Aorta (tissue), 5 donors: ENCODE measurements at regions of chr12 and their contacts with region 1.

Region 1: DNA sequence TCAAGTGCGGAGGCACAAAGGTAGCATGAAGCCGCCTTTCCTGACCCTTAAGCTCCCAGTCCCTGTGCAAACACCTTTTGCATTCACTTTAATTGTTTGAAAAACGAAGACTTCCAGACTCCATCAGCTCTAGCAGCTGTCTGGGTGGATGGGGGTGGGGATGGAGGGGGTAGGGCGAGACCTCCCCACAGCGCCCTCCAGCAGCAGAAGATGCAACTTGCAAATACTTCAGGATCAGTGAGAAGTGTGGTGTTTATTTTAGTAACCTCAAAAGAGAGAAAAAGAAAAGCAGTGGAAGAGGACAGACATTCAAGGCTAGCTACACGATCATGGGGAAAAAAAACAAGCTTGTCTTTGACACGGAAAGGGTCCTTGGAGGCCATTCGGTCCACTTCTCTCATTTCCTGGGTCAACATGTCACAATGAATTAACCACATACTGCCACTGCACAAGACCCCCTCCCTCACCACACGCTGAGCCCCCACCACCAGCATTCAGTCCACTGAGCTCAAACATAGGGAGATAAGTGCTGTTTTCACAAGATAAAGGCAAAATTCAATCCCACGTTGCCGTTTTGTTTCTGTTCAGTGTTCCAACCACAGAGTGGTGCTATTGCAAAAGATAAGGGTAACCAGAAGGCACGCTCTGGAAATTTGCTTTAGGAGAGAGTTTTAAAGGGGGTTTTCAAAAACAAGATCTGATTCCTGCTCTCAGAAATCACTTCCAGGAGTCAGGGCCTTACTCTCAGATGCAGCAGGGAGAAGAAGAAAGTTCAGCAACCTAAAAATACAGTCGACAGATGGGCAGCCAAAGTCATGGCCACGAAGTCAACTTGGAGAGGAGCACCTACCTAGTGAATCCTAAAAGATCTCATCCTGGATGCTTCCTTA is 3.3 kb upstream of the NTF3 start:
- DNase-seq: no peak
- ATAC-seq: no peak
- H3K4me3 ChIP-seq: no peak overlapping the region
- H3K27ac ChIP-seq: no peak overlapping the region
- H3K4me1 ChIP-seq: no peaks in the 10 kb centered on the region
- H3K27me3 ChIP-seq: no peaks in the 10 kb centered on the region

Region 2: GRCh38 chr12:5022465-5023061 is 406.0 kb before region 1 on chr12:
- intact Hi-C with region 1: loop called (anchors 5 to 10 kb)
- DNase-seq: peak in 1 of 2 donors; percentile 81
- ATAC-seq: peak; percentile 63
- H3K4me3 ChIP-seq: no peak overlapping the region
- H3K27ac ChIP-seq: no peak overlapping the region
- H3K4me1 ChIP-seq: peaks cover 0 to 2% of the 10 kb centered on the region in 2 donors
- H3K27me3 ChIP-seq: no peaks in the 10 kb centered on the region

Region 3: GRCh38 chr12:5488626-5488955 is 60.0 kb after region 1 on chr12:
- intact Hi-C with region 1: loop called in 1 of 2 experiments (anchors 5 kb)
- DNase-seq: no peak
- ATAC-seq: no peak
- H3K4me3 ChIP-seq: no peak overlapping the region
- H3K27ac ChIP-seq: peak overlapping the region; percentile 73 to 99
- H3K4me1 ChIP-seq: peaks cover 4 to 12% of the 10 kb centered on the region in 2 donors
- H3K27me3 ChIP-seq: no peaks in the 10 kb centered on the region

Region 4: DNA sequence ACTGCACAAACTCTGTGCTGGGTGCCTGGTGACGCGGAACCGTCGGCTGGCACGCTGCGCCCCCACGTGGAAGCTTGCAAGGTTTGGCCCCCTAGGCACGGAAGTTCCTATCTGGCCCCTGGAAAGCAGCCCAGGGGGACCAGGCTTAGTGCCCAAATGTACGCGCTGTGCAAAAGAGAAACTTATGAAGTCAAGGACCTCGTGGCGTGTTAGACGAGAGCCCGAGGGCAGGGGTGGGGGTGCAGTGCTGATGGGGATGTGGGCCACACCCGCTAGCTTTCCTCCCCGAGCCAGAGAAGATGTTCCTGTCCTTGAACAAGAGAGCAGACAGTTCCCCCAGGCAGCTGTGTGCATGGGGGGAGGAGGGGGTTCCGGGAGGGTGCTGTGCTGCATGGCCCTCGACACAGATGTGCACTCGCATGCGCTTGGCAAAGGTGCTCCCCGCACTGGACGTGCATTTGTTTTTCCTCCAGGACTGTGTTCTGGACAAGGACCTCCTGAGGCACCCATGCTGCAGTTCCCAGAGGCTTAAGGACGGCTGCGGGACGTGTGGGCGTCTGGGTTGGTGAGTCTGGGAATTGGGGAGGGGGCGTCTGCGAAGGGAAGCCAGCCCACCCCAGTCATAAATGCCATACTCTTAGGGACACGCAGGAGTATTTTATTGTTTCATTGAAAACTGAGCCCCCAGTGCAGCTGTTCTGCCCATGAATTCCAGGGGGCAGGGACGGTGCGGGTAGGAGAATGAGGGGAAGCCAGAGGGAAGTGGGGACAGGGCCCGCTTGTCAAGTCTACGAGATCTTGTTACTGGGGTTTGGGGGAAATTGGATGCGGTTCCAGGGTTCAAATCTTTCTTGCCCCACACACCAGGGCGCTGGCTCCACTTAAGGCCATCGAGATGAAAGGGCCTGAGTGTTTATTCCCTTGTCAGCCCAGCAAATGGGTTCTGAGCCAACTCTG is 83.3 kb after region 1 on chr12:
- intact Hi-C with region 1: loop called (anchors 1 kb)
- DNase-seq: peak; percentile 74 to 91
- ATAC-seq: peak; percentile 69
- H3K4me3 ChIP-seq: no peak overlapping the region
- H3K27ac ChIP-seq: no peak overlapping the region
- H3K4me1 ChIP-seq: no peaks in the 10 kb centered on the region
- H3K27me3 ChIP-seq: no peaks in the 10 kb centered on the region

Region 5: DNA sequence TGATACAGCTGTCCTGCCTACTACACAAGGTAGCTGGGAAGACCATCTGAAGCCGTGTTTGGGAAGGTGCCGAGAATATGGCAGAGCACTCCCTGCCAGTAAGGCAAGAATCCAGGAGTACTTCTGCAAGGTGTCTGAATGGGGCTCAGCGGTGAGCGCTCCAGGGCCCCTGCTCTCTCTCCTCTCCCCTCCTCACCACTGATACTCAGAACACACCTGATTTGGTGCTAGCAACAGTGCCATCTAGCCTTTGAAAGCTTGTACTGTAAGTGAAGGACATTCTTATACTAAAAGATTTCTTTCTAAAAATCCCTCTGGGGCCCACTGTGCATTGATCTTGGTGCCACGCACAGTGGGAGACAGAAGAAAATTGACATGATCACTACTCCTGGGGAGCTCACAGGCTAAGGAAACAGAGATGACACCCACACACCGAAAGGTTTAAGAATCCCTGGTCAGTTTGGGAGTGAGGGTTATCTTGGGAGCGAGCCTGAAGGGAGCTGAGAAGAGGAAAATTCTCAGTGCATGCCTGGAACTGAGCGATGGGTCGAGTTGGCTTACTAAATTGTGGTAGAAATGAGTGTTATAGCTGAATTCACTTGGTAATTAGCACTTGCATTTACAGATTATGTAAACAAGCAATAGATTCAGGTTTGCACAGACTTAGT is 220.2 kb after region 1 on chr12:
- intact Hi-C with region 1: loop called (anchors 5 kb)
- DNase-seq: no peak
- ATAC-seq: peak; percentile 60
- H3K4me3 ChIP-seq: no peak overlapping the region
- H3K27ac ChIP-seq: no peak overlapping the region
- H3K4me1 ChIP-seq: no peaks in the 10 kb centered on the region
- H3K27me3 ChIP-seq: no peaks in the 10 kb centered on the region

Region 6: GRCh38 chr12:5796171-5796958 is 367.8 kb after region 1 on chr12:
- intact Hi-C with region 1: loop called (anchors 2 to 5 kb)
- DNase-seq: peak in 1 of 2 donors; percentile 80
- ATAC-seq: peak; percentile 72
- H3K4me3 ChIP-seq: no peak overlapping the region
- H3K27ac ChIP-seq: no peak overlapping the region
- H3K4me1 ChIP-seq: no peaks in the 10 kb centered on the region
- H3K27me3 ChIP-seq: no peaks in the 10 kb centered on the region